B cell (primary cell): ENCODE measurements at regions of chr14 and their contacts with region 1.

Region 1: DNA sequence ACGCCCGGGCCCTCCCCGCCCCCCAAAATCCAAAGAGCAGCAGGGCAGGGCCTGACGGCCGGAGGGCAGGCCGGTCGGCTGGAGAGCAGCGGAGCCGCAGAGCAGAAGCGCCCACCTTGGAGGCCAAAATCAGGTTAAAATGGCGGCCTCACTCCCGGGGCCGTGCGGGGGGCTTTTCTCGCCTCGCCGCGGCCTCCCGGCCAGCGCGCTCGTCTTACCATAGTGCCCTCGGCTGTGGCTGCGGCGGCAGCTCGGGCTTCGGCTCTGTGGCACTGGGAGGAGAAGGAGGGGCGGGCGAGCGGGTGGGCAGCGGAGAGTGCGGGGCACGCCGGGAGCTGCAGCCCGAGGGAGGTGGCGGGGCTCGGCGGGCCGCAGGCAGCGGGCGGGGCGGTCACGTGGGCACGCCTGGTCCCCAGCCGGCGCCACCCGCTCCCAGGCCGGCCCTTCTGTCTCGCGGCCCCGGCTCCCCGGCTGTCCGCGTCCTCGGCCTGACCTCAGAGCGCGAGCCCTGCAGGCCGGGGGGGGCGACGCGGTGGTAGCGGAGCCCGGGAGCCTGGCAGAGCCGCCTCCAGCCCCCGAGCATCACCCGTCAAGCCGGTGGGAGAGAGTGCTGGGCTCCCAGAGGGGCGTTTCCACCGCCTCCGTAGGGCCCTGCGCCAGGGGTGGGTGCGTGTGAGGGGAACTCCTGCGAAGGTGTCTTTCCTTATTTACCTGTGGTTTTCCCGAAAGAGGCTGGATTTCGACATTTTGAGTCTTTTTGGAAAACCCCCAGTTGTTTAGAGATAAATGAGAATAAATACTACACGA is at the start of gene CFL2:
- DNase-seq: peak; percentile 86
- ATAC-seq: peak; percentile 91
- H3K4me3 ChIP-seq: peak within 1 kb of the TSS; percentile 61 to 91 (median 81)
- H3K4me3 Mint-ChIP-seq: peak within 1 kb of the TSS; percentile 94
- H3K27ac ChIP-seq: peak within 1 kb of the TSS; percentile 75 to 87
- H3K27ac Mint-ChIP-seq: peak within 1 kb of the TSS; percentile 94
- H3K4me1 ChIP-seq: peaks cover 11 to 15% of the 10 kb centered on the region in 2 donors
- H3K4me1 Mint-ChIP-seq: peaks cover 29% of the 10 kb centered on the region
- H3K27me3 ChIP-seq: no peaks in the 10 kb centered on the region
- H3K27me3 Mint-ChIP-seq: no peaks in the 10 kb centered on the region
- CTCF ChIP-seq: no peak
- total RNA-seq, gene CFL2: 21.9 and 25.2 TPM in 2 replicates

Region 2: DNA sequence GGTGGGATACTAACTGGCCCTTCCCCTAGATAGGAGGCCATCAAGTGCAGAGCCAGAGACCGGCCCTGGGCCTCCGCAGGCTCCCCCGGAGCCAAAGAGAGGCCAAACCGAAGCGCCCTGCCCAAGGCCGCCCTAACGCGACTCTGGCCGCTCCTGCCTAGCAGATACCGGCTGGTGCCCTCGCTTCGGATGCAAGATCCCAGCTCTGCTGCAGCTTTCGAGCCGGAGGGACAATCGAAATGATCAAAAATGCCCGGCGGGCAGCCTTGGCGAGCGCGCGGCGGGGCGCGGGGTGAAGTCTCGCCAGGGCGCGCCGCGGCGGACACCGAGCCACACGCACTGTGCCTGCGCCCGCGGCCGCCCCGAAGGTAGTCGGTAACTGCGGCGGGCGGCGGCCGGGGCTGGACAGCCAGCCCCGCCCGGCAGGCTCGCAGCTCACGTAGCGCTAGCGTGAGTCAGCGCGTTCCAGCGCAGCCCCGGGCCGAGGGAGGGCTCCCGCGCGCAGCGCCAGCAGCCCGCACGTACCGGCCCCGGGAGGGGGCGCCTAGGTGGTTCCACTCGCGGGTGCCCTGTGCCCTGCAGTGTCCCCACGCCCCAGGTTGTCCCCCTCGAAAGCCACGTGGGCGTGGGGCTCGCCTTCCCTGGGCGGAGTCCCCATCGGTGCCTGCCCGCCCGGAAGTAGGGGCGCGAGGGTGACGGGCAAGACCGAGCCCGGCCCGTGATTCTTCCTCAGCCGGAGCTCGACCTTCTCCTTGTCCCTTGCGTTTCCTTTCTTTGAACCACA is 654.5 kb before region 1 on chr14:
- CTCF ChIA-PET with region 1: no interaction called
- POLR2A ChIA-PET with region 1: no interaction called
- intact Hi-C with region 1: no loop called
- DNase-seq: peak; percentile 37
- ATAC-seq: peak; percentile 47
- H3K4me3 ChIP-seq: peak overlapping the region; percentile 37 to 60 (median 53)
- H3K4me3 Mint-ChIP-seq: peak overlapping the region; percentile 84
- H3K27ac ChIP-seq: no peak overlapping the region
- H3K27ac Mint-ChIP-seq: no peak overlapping the region
- H3K4me1 ChIP-seq: peaks cover 11% of the 10 kb centered on the region in 2 donors
- H3K4me1 Mint-ChIP-seq: peaks cover 13% of the 10 kb centered on the region
- H3K27me3 ChIP-seq: peaks cover 0 to 21% (median 5%) of the 10 kb centered on the region in 4 experiments
- H3K27me3 Mint-ChIP-seq: peaks cover 24% of the 10 kb centered on the region
- CTCF ChIP-seq: no peak

Region 3: DNA sequence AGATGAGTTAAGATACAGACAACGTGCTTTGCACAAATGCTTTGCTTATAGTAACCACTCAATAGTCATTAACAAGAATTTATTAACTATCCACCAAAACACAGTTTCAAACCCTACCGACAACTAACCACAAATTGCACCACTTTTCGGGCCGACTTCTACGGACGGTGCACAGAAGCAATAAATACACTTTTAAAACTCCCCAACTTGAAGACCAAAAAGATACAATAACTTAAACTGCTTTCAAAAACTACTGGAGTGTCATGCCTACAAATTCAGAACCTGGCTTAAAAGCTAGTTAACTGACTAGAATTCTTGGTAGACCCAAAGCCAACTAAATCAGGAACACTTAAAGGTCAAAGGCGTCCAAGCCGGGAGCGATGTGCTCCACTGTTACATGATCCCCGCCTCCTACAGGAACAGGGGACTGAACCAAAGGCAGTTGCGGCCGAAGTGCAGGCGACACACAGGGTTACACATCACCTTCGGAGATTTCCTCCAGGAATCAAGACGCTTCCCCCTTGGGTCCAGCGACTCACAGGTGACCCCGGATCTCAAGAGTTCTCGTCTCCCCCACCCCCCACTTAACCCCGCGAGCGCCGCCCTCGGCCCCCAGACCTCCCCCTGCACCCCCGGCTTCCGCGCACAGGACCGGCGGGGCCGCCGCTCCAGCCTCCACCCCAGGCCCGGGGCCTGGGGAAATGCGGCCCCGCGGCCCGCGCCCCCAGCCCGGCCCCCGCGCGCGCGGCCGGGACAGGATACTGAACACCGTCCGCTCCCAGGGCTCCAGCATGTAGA is 253.0 kb before region 1 on chr14:
- CTCF ChIA-PET with region 1: no interaction called
- POLR2A ChIA-PET with region 1: no interaction called
- intact Hi-C with region 1: loop called (anchors 10 kb)
- DNase-seq: peak; percentile 50
- ATAC-seq: no peak
- H3K4me3 ChIP-seq: peak overlapping the region; percentile 50 to 95 (median 64)
- H3K4me3 Mint-ChIP-seq: peak overlapping the region; percentile 86
- H3K27ac ChIP-seq: peak overlapping the region; percentile 16 to 60
- H3K27ac Mint-ChIP-seq: peak overlapping the region; percentile 91
- H3K4me1 ChIP-seq: peaks cover 8 to 15% of the 10 kb centered on the region in 2 donors
- H3K4me1 Mint-ChIP-seq: peaks cover 18% of the 10 kb centered on the region
- H3K27me3 ChIP-seq: no peaks in the 10 kb centered on the region
- H3K27me3 Mint-ChIP-seq: no peaks in the 10 kb centered on the region
- CTCF ChIP-seq: no peak

Region 4: GRCh38 chr14:34619471-34619870 is 95.1 kb before region 1 on chr14:
- CTCF ChIA-PET with region 1: no interaction called
- POLR2A ChIA-PET with region 1: no interaction called
- intact Hi-C with region 1: no loop called
- DNase-seq: no peak
- ATAC-seq: no peak
- H3K4me3 ChIP-seq: no peak overlapping the region
- H3K4me3 Mint-ChIP-seq: no peak overlapping the region
- H3K27ac ChIP-seq: no peak overlapping the region
- H3K27ac Mint-ChIP-seq: no peak overlapping the region
- H3K4me1 ChIP-seq: no peaks in the 10 kb centered on the region
- H3K4me1 Mint-ChIP-seq: peaks cover 12% of the 10 kb centered on the region
- H3K27me3 ChIP-seq: no peaks in the 10 kb centered on the region
- H3K27me3 Mint-ChIP-seq: no peaks in the 10 kb centered on the region
- CTCF ChIP-seq: no peak

Region 5: DNA sequence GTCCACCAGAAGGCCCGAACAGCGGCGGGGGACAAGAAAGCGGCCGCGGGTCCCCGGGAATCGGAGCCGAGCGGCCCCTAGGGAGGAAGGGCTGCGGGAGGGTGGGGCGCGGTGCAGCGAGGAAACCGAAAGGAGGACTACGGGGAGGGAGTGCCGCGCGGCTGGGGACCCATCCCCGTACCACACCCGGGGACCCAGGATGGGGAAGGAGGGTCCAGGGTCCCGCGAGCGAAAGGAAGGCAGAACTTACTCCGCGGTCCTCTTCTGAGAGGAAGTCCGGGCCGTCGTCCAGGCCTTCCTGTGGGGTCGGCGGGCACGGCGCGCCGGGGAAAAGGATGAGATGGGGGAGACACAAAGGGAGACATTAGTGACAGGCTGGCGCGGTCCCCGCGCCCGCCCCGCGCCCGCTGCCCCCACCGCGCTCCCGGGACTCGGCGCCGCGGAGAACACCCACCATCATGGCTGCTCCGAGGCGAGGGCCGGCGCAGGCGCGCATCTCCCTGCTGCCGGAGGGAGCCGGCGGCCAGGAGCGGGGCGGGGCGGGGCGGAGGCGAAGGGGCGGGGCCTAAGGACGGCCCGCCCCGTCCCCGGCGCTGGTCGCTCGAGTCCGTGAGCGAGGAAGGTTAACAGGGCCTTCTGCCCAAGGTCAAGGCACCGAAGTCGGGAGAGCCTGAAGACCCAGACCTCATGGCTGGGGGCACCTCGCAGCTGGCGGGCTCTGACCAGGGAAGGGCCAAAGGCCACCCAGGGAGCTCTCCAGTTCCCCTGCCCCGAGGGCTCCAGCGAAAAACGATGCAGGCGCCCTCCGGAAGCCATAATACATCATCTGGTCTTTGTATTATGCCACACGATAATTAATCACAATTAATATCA is 84.6 kb before region 1 on chr14 and contains the start of gene SNX6:
- CTCF ChIA-PET with region 1: interaction called, 3 read pairs
- POLR2A ChIA-PET with region 1: no interaction called
- intact Hi-C with region 1: loop called (anchors 2 kb)
- DNase-seq: peak; percentile 89
- ATAC-seq: peak; percentile 98
- H3K4me3 ChIP-seq: peak within 1 kb of the TSS; percentile 50 to 98 (median 96)
- H3K4me3 Mint-ChIP-seq: peak within 1 kb of the TSS; percentile 95
- H3K27ac ChIP-seq: peak within 1 kb of the TSS; percentile 85 to 94
- H3K27ac Mint-ChIP-seq: peak within 1 kb of the TSS; percentile 93
- H3K4me1 ChIP-seq: peaks cover 11 to 18% of the 10 kb centered on the region in 2 donors
- H3K4me1 Mint-ChIP-seq: peaks cover 18% of the 10 kb centered on the region
- H3K27me3 ChIP-seq: peaks cover 0 to 3% (median 0%) of the 10 kb centered on the region in 4 experiments
- H3K27me3 Mint-ChIP-seq: no peaks in the 10 kb centered on the region
- CTCF ChIP-seq: no peak
- total RNA-seq, gene SNX6: 61.0 and 66.3 TPM in 2 replicates

Region 6: GRCh38 chr14:34671716-34672115 is 42.8 kb before region 1 on chr14:
- CTCF ChIA-PET with region 1: interaction called, 14 read pairs
- POLR2A ChIA-PET with region 1: interaction called, 10 read pairs
- intact Hi-C with region 1: no loop called
- DNase-seq: no peak
- ATAC-seq: no peak
- H3K4me3 ChIP-seq: no peak overlapping the region
- H3K4me3 Mint-ChIP-seq: no peak overlapping the region
- H3K27ac ChIP-seq: no peak overlapping the region
- H3K27ac Mint-ChIP-seq: no peak overlapping the region
- H3K4me1 ChIP-seq: no peaks in the 10 kb centered on the region
- H3K4me1 Mint-ChIP-seq: no peaks in the 10 kb centered on the region
- H3K27me3 ChIP-seq: no peaks in the 10 kb centered on the region
- H3K27me3 Mint-ChIP-seq: no peaks in the 10 kb centered on the region
- CTCF ChIP-seq: no peak

Region 7: DNA sequence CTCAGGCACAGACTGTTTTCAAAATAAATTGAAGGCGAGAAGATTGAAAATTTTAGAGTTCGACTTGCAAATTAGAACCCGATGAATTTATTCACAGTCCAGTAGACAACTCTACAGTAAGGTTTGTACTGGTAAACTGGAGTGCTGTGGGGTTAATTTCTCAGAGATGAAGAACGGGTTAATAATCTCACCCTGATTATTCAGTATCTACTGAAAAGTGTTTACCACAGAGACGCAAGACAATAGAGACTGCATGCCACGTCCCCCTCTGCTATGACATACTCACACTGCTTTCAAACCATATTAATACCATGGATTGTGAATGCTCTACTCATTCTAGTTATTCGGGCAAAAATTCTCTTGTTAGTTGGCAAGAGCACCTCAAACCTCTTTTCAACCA is 36.2 kb before region 1 on chr14:
- CTCF ChIA-PET with region 1: interaction called, 14 read pairs
- POLR2A ChIA-PET with region 1: interaction called, 10 read pairs
- intact Hi-C with region 1: no loop called
- DNase-seq: no peak
- ATAC-seq: no peak
- H3K4me3 ChIP-seq: no peak overlapping the region
- H3K4me3 Mint-ChIP-seq: no peak overlapping the region
- H3K27ac ChIP-seq: no peak overlapping the region
- H3K27ac Mint-ChIP-seq: no peak overlapping the region
- H3K4me1 ChIP-seq: no peaks in the 10 kb centered on the region
- H3K4me1 Mint-ChIP-seq: no peaks in the 10 kb centered on the region
- H3K27me3 ChIP-seq: no peaks in the 10 kb centered on the region
- H3K27me3 Mint-ChIP-seq: no peaks in the 10 kb centered on the region
- CTCF ChIP-seq: no peak

Region 8: GRCh38 chr14:35506927-35507326 is 792.4 kb after region 1 on chr14:
- CTCF ChIA-PET with region 1: no interaction called
- POLR2A ChIA-PET with region 1: no interaction called
- intact Hi-C with region 1: no loop called
- DNase-seq: no peak
- ATAC-seq: no peak
- H3K4me3 ChIP-seq: no peak overlapping the region
- H3K4me3 Mint-ChIP-seq: no peak overlapping the region
- H3K27ac ChIP-seq: no peak overlapping the region
- H3K27ac Mint-ChIP-seq: no peak overlapping the region
- H3K4me1 ChIP-seq: no peaks in the 10 kb centered on the region
- H3K4me1 Mint-ChIP-seq: no peaks in the 10 kb centered on the region
- H3K27me3 ChIP-seq: no peaks in the 10 kb centered on the region
- H3K27me3 Mint-ChIP-seq: peaks cover 8% of the 10 kb centered on the region
- CTCF ChIP-seq: no peak